Stomach (tissue), 19 donors: ENCODE measurements at regions of chr1 and their contacts with region 1.

Region 1: GRCh38 chr1:35451125-35451528 is 106.1 kb downstream of the KIAA0319L start:
- DNase-seq: peak; percentile 87 to 91
- H3K4me3 ChIP-seq: peak overlapping the region in 1 of 4 donors; percentile 4
- H3K27ac ChIP-seq: peak overlapping the region in 4 of 5 donors; percentile 44 to 87 (median 68)
- H3K4me1 ChIP-seq: peaks cover 35 to 79% (median 54%) of the 10 kb centered on the region in 4 donors
- H3K27me3 ChIP-seq: no peaks in the 10 kb centered on the region
- CTCF ChIP-seq: peak in 5 of 7 experiments; percentile 63 to 90 (median 84)
- EP300 ChIP-seq: no peak
- POLR2A ChIP-seq: no peak

Region 2: GRCh38 chr1:35564037-35564883 is 113.1 kb after region 1 on chr1:
- intact Hi-C with region 1: loop called (anchors 5 kb)
- DNase-seq: peak; percentile 88 to 92
- H3K4me3 ChIP-seq: no peak overlapping the region
- H3K27ac ChIP-seq: no peak overlapping the region
- H3K4me1 ChIP-seq: peaks cover 17 to 37% (median 26%) of the 10 kb centered on the region in 4 donors
- H3K27me3 ChIP-seq: peaks cover 0 to 2% (median 0%) of the 10 kb centered on the region in 3 donors
- CTCF ChIP-seq: peak in 5 of 7 experiments; percentile 56 to 78 (median 74)
- EP300 ChIP-seq: no peak
- POLR2A ChIP-seq: no peak

Region 3: GRCh38 chr1:35726450-35727433 is 275.6 kb after region 1 on chr1:
- intact Hi-C with region 1: loop called (anchors 10 kb)
- DNase-seq: peak; percentile 49 to 88
- H3K4me3 ChIP-seq: no peak overlapping the region
- H3K27ac ChIP-seq: no peak overlapping the region
- H3K4me1 ChIP-seq: peaks cover 0 to 10% (median 5%) of the 10 kb centered on the region in 4 donors
- H3K27me3 ChIP-seq: peaks cover 0 to 3% (median 0%) of the 10 kb centered on the region in 3 donors
- CTCF ChIP-seq: peak in 5 of 7 experiments; percentile 44 to 79 (median 76)
- EP300 ChIP-seq: no peak
- POLR2A ChIP-seq: no peak